ENCODE measurements at regions of chr3 and their contacts with region 1.

Region 1: DNA sequence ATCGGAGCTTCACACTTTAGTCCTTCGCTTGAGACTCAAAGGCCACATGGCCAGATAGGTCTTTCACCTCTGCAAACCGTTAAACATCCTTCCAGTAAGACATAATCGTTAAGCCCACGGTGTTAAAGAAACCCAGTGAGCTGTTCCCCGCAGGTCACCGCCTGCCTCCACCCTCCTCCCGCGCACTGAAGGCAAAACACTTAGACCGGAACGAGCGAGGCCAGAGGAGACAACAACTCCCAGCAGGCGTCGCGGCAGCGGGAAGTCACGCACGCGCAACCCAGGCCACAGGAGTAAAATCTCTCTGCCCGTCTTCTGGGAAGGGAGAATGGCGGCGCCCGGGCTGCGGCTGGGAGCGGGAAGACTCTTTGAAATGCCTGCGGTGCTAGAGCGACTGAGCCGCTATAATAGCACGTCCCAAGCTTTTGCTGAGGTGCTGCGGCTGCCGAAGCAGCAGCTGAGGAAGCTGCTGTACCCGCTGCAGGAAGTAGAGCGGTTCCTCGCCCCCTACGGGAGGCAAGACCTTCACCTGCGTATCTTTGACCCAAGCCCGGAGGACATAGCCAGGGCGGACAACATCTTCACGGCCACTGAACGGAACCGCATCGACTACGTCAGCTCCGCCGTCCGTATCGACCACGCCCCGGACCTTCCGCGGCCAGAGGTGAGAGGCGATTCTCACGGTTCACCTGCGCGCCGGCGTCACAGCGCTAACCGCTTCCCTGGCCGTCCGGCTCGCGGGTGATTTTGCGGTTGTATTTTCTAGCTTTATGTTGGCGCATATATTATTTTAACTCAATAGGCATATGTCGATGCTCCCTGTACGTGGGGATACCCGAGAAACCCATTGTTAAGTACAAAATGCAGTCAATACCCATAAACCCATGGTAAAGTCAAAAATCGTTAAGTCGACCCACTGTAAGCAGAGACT is at the start of gene GTPBP8:
- DNase-seq: peak; percentile 95
- ATAC-seq: peak; percentile 96
- H3K4me3 Mint-ChIP-seq: peak within 1 kb of the TSS; percentile 81
- H3K27ac Mint-ChIP-seq: peak within 1 kb of the TSS; percentile 94
- H3K4me1 Mint-ChIP-seq: peaks cover 70% of the 10 kb centered on the region
- H3K27me3 Mint-ChIP-seq: no peaks in the 10 kb centered on the region
- total RNA-seq, gene GTPBP8: 34.3 to 43.0 TPM

Region 2: GRCh38 chr3:112437146-112438022 is 553.6 kb before region 1 on chr3:
- CTCF ChIA-PET with region 1: no interaction called
- POLR2A ChIA-PET with region 1: no interaction called
- intact Hi-C with region 1: no loop called
- DNase-seq: peak; percentile 22
- ATAC-seq: peak; percentile 92
- H3K4me3 Mint-ChIP-seq: no peak overlapping the region
- H3K27ac Mint-ChIP-seq: peak overlapping the region; percentile 64
- H3K4me1 Mint-ChIP-seq: peaks cover 39% of the 10 kb centered on the region
- H3K27me3 Mint-ChIP-seq: no peaks in the 10 kb centered on the region

Region 3: GRCh38 chr3:113002679-113003078 is 11.7 kb after region 1 on chr3:
- CTCF ChIA-PET with region 1: interaction called, 22 read pairs
- POLR2A ChIA-PET with region 1: interaction called, 3 read pairs
- intact Hi-C with region 1: loop called (anchors 1 kb)
- DNase-seq: peak; percentile 77
- ATAC-seq: peak; percentile 77
- H3K4me3 Mint-ChIP-seq: no peak overlapping the region
- H3K27ac Mint-ChIP-seq: peak overlapping the region; percentile 89
- H3K4me1 Mint-ChIP-seq: peaks cover 83% of the 10 kb centered on the region
- H3K27me3 Mint-ChIP-seq: no peaks in the 10 kb centered on the region

Region 4: DNA sequence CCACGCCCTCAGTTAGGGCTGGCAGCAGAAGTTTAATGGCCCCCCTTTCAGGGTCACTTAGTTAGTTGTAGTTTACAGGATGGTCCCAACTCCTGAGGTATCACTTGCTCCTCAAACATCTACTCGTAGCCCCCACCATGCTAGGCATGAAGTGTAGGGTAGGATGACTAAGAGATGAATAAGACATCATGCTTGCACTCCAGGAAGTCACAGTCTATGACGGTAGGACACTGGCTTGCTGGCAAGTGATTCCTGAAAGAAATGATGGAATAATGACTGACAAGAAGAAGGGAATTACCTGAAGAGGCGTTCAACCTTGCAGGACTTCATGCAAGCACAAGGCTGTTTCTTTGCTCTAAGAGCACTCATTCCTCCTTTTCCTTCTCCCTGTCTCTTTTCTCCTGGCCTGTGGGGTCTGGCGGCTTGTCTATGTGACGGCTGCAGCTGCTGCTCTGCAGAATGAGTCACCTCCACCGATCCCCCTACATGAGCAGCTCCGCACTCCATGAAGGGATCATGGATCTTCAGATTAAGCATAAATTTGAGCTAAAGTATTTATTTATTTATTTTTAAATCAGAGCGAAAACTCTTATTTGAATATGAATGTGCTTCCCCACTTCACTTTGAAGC is 137.6 kb after region 1 on chr3:
- CTCF ChIA-PET with region 1: no interaction called
- POLR2A ChIA-PET with region 1: no interaction called
- intact Hi-C with region 1: no loop called
- DNase-seq: no peak
- ATAC-seq: no peak
- H3K4me3 Mint-ChIP-seq: no peak overlapping the region
- H3K27ac Mint-ChIP-seq: no peak overlapping the region
- H3K4me1 Mint-ChIP-seq: peaks cover 2% of the 10 kb centered on the region
- H3K27me3 Mint-ChIP-seq: no peaks in the 10 kb centered on the region